ENCODE measurements at regions of chr3 and their contacts with region 1.

Region 1: DNA sequence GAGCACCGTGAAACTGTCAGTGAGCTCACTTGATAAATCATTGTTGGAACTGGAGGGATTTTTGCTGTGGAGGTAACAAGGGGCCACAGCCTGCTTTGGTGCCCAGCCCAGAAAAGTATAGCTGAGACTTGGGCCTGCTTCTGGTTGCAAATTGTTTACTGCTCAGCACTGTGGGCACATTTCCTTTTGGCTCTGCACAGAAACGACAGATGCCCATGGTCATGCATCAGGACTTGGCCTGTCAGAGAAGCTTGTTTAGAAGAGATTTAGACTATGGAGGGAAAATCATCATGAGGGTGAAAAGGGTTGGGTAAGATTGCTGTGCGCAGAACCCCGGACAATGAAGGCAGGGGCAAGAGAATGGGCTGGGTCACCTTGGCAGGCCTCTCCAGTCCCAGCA is 286.1 kb upstream of the CTNNB1 start:
- DNase-seq: no peak
- H3K4me3 ChIP-seq: no peak overlapping the region
- H3K27ac ChIP-seq: no peak overlapping the region
- H3K4me1 ChIP-seq: peaks cover 3 to 26% (median 18%) of the 10 kb centered on the region in 4 donors
- H3K27me3 ChIP-seq: no peaks in the 10 kb centered on the region
- CTCF ChIP-seq: no peak
- EP300 ChIP-seq: no peak
- POLR2A ChIP-seq: no peak

Region 2: DNA sequence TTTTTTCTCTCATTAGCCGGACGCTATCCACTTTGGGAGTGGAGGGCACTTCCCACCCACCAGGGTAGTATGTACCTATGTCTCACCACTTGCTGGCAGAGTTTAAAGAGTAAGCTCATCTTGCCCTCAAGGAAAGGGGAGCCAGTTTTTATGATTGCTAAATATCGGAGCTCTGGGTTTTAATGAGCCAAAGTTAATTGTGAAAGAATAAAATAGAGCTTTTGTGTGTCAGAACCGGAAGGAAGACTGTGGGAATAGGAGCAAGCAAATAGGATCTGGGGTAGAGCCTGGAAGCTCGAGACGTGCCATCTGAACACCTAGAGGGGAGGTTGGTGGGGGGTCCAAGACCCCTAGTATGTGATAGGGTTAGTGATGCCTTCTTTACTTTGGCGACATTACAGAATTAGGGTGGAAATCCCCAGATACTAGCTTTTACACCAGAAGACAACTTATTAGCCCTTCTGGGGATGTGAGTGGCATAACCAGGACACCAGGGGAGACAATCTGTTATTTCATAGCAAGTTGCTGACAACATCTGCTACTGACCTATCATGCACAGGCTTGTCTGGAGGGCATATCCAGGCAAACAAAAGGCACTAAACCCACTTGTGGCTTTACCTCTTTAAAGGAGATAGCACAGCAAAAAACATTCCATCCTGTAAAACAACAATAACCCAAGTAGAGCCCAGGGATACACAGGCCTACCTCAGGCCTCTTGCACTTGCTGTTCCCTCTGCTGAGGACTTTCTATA is 54.7 kb before region 1 on chr3:
- in situ Hi-C with region 1: no loop called
- intact Hi-C with region 1: no loop called
- DNase-seq: no peak
- H3K4me3 ChIP-seq: no peak overlapping the region
- H3K27ac ChIP-seq: no peak overlapping the region
- H3K4me1 ChIP-seq: no peaks in the 10 kb centered on the region
- H3K27me3 ChIP-seq: no peaks in the 10 kb centered on the region
- CTCF ChIP-seq: no peak
- EP300 ChIP-seq: no peak
- POLR2A ChIP-seq: no peak

Region 3: GRCh38 chr3:40869939-40870338 is 43.3 kb before region 1 on chr3:
- in situ Hi-C with region 1: no loop called
- intact Hi-C with region 1: loop called (anchors 1 kb)
- DNase-seq: no peak
- H3K4me3 ChIP-seq: no peak overlapping the region
- H3K27ac ChIP-seq: no peak overlapping the region
- H3K4me1 ChIP-seq: no peaks in the 10 kb centered on the region
- H3K27me3 ChIP-seq: no peaks in the 10 kb centered on the region
- CTCF ChIP-seq: no peak
- EP300 ChIP-seq: no peak
- POLR2A ChIP-seq: no peak

Measured in transverse colon (tissue), 4 donors.